ENCODE measurements at regions of chr2 and their contacts with region 1.

Region 1: DNA sequence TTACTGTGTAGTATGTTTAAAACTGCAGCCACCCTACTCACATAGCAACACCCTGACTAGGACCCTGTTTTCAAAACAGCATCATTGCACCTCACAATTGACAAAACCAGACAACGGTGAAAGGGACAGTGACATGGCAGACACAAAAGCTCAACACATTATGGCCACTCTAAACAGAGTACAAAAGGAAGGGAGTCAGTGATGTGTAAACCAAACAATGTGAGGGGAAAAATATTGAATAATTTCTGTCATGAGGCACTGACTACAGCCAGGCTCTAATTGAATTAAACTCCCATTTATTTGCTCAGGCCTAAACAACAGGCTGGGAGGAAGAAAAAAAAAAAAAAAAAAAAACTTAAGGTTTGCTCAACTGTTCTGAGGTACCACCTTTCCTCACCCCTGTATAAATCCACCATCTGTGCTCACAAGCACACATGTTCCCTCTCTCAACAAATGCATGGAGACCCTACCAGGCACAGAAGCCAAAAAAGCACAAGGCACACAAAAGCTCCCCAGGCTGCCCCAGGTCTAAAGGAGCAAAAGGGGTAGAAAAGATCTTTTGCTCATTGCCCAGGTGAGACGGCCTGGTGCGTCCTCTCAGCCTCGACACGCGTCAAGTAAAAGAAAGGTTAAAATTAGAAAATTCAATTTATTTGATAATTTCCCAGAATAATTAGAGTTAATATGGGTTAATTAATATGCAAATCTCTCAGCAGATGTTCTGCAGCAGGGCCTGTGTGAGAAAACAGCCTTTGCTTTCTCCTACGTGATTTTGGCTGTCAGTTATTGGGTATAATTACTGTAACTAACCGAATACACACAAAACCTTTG is 80.9 kb downstream of the ZEB2 start:
- DNase-seq: no peak
- H3K4me3 ChIP-seq: no peak overlapping the region
- CTCF ChIP-seq: no peak

Region 2: DNA sequence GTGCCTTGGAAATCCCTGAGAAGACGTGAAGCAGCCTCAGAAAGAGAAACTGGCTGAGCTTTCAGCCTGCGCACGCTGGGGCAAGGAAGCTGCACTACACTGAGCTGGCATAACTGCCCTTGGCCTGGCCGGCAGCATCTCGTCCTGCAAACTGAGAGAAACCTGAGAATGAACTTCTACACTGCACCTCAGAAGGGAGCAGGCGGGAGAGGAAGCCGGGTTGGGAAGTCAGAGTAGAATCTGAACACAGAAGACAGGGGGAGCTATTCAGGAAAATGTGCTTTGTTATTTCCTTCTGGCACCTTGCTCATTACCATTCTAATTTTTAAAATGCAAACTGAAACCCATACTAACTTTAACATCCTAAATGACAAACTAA is 10.0 kb after region 1 on chr2:
- CTCF ChIA-PET with region 1: interaction called, 30 read pairs
- POLR2A ChIA-PET with region 1: no interaction called
- DNase-seq: no peak
- H3K4me3 ChIP-seq: no peak overlapping the region
- CTCF ChIP-seq: peak; percentile 10

Region 3: DNA sequence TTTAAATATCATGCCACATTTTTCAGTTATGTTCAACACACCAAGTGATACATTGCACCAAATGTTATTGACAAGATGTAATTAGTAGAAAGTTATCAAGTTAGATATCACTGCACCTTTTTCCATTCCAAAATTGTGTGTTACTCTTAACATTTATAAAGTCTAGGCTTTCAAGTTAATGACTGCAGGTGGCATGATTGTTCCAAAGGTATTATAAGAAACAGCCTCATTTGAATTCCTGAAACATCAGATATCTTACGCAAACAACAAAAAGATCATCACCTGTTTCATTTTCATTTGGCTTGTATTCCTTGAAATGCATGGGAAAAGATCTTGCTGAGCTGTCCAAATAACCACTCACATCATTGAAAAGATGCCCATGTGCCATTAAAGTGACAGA is 1609.1 kb after region 1 on chr2:
- CTCF ChIA-PET with region 1: no interaction called
- POLR2A ChIA-PET with region 1: no interaction called
- DNase-seq: no peak
- H3K4me3 ChIP-seq: no peak overlapping the region
- CTCF ChIP-seq: no peak

Measured in AG04449 (cell line).